HEK293T (cell line): ENCODE measurements at regions of chr9 and their contacts with region 1.

Region 1: DNA sequence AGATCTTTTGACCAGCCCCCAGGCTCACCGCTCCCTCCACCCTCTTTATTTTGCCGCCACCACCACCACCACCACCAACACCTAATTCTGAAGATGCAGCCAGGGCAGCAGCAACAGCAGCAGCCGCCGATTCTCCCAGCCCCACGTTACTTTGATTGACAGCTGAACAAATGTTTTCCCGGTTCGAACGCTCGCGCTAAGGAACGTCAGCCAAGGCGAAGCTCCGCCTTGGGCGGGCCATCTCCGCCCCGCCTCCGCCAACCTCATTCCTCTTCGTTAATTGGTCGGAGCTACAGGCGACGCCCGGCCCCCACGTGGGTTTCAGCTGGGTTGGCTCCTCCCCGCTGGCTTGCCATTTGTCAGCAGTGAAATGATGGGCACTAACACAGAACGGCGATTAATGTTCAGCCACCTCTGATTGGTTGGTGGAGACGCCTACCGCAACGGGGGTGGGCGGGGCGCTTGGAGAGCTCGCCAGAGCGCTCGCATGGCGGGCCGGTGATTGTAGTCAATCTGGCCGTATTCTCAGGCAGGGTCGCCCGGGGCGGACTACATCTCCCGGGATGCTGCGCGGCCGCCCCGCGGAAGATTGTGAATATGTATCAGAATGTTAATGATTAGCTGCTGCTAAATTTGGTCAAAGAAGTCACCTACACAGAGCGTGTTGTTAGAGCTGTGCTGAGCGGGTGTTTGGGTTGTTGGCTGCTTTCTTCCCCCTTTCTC is at the start of gene TLE4:
- DNase-seq: peak; percentile 100

Region 2: DNA sequence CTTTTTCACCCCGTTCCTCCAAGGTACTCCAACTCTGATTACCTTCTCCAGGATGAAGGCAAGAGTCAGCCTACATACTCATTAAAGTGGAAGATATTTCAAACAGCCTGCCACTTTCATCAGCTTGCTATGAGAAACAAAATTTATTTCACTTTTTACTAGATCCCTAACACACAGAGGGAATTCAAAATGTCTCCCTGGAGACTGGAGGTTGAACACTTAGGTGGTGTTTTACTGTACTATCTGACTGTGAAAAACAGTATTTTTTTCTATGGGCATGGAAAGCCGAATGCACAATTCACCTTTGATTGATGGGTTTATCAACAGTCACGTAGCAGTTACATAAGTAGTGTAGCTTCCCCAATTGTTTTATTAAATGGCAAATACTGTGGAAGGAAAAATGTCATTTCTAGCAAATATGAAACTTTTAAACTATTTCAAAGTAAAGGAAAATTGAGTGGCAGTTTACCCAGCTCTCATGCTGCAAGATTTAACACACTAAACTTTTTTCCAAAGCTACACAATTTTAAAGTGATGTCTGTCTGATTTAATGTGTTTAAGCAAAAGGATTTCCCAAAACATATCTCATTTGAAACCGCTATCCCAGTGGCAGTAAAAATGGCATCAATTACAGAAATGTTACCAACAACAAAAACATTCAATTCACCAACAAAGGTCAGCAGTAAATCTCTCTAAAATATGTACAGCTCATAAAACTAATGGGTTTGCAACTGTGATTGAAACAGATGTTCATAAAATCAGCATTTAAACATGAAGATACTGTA is 124.8 kb before region 1 on chr9:
- CTCF ChIA-PET with region 1: no interaction called
- POLR2A ChIA-PET with region 1: interaction called, 16 read pairs
- DNase-seq: peak; percentile 74

Region 3: GRCh38 chr9:79501566-79501965 is 69.9 kb before region 1 on chr9:
- CTCF ChIA-PET with region 1: no interaction called
- POLR2A ChIA-PET with region 1: no interaction called
- DNase-seq: no peak

Region 4: GRCh38 chr9:79551994-79552393 is 19.5 kb before region 1 on chr9:
- CTCF ChIA-PET with region 1: interaction called, 3 read pairs
- POLR2A ChIA-PET with region 1: interaction called, 18 read pairs
- DNase-seq: no peak

Region 5: GRCh38 chr9:79610791-79611614 is 39.5 kb after region 1 on chr9:
- CTCF ChIA-PET with region 1: interaction called, 3 read pairs
- POLR2A ChIA-PET with region 1: interaction called, 13 read pairs
- DNase-seq: no peak

Region 6: DNA sequence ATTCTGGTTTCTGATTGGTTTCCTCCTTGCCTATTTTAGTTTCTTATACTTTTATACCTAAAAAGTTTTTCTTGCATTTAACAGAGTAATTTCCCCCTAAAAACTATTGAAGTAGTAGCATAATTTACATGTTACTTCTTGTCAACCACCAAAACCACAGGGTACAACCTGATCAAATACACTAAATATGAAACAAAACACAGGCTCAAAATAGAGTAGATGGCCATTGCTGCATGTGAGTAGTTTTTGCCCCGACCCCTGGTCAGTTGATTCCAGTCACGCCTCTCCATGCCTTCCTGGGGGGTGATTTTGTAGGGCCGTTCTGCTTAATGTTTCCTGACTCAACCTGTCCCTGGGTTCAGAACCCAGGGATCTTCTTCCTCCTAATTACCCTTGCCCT is 102.1 kb after region 1 on chr9:
- CTCF ChIA-PET with region 1: interaction called, 5 read pairs
- POLR2A ChIA-PET with region 1: interaction called, 21 read pairs
- DNase-seq: no peak

Region 7: DNA sequence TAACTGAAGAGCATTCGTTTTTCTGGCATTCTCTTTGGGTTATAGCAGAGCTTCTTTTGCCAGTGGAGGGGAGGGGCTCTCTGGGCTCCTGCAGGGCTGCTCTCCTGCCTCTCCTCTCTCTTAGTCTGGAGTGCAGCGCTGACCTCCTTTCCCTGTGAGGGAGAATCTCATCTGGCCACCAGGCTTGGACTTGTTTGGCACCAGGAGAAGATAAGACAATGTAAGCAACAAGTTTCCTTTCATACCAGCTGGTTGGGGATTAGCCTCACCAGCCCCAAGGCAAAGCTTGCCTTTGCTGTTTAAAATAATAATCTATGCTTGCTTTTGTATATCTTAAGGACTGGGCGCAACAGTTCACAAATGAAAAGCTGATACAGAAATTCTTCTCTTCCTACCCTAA is 196.7 kb after region 1 on chr9:
- CTCF ChIA-PET with region 1: no interaction called
- POLR2A ChIA-PET with region 1: interaction called, 10 read pairs
- DNase-seq: peak; percentile 80